ENCODE measurements at regions of chr9 and their contacts with region 1.

Region 1: GRCh38 chr9:96769989-96770388 is 7.9 kb downstream of the ZNF510 start:
- H3K4me3 Mint-ChIP-seq: no peak overlapping the region
- H3K27ac Mint-ChIP-seq: no peak overlapping the region
- H3K4me1 Mint-ChIP-seq: no peaks in the 10 kb centered on the region
- H3K27me3 Mint-ChIP-seq: no peaks in the 10 kb centered on the region

Region 2: GRCh38 chr9:96818535-96818934 is 48.5 kb after region 1 on chr9:
- intact Hi-C with region 1: loop called (anchors 10 kb)
- H3K4me3 Mint-ChIP-seq: no peak overlapping the region
- H3K27ac Mint-ChIP-seq: no peak overlapping the region
- H3K4me1 Mint-ChIP-seq: no peaks in the 10 kb centered on the region
- H3K27me3 Mint-ChIP-seq: no peaks in the 10 kb centered on the region

Measured in dendritic cell treated with granulocyte-macrophage colony-stimulating factor and Interleukin-4, amounts not matched to agents 40 ng/mL and 50 ng/mL, for 4 days (primary cell).